ENCODE measurements at regions of chr10 and their contacts with region 1.

Region 1: GRCh38 chr10:116444527-116445142 is 17.0 kb downstream of the PNLIPRP3 start:
- DNase-seq: peak; percentile 21
- H3K4me3 ChIP-seq: no peak overlapping the region
- H3K27ac ChIP-seq: no peak overlapping the region
- H3K4me1 ChIP-seq: no peaks in the 10 kb centered on the region
- H3K27me3 ChIP-seq: no peaks in the 10 kb centered on the region
- CTCF ChIP-seq: peak; percentile 55 to 68
- POLR2A ChIP-seq: no peak

Region 2: GRCh38 chr10:116430288-116430687 is 14.3 kb before region 1 on chr10:
- CTCF ChIA-PET with region 1: no interaction called
- POLR2A ChIA-PET with region 1: no interaction called
- dilution Hi-C with region 1: no loop called
- intact Hi-C with region 1: no loop called
- DNase-seq: no peak
- H3K4me3 ChIP-seq: no peak overlapping the region
- H3K27ac ChIP-seq: no peak overlapping the region
- H3K4me1 ChIP-seq: no peaks in the 10 kb centered on the region
- H3K27me3 ChIP-seq: no peaks in the 10 kb centered on the region
- CTCF ChIP-seq: no peak
- POLR2A ChIP-seq: no peak

Region 3: DNA sequence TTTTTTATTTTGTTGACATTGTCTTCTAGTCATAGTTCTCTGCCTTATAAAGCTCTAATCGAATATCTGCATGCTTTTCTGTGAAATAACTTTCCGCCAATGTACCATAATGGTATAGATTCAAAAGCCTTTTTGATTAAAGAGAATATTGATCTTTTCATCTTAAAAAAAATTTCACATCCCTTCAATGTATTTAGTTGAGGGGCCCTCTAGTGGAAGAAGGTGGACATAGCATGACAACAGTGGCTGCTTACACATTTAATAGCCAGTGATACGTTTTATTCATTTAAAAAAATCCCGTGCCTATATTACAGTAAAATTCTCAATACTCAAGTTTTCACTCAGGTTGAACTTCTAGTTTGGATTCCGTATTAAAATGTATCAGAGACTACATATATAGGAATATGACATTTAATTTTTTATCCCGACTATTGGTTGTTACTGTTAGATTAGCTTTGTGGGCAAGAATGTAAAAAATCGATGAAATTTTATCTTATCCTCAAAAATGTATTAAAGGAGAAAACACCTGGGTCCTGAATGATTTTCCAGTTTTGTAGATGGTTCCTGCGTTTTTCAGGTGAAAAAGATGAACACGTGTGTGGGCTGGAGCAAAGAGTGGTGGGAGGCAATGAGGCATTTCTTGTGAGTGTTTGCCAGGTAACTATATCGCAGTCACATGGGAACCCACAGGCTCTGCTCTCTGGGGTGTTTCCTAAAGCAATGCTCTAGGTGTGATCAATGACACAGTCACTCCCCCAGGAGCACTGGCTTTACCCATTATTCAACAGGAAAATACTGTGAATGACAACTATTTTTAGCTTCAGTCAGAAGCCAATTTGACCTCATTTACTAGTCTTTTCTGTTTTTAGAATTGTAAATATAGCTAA is 77.0 kb after region 1 on chr10:
- CTCF ChIA-PET with region 1: interaction called, 3 read pairs
- POLR2A ChIA-PET with region 1: no interaction called
- dilution Hi-C with region 1: no loop called
- intact Hi-C with region 1: loop called (anchors 1 kb)
- DNase-seq: peak; percentile 32
- H3K4me3 ChIP-seq: no peak overlapping the region
- H3K27ac ChIP-seq: no peak overlapping the region
- H3K4me1 ChIP-seq: no peaks in the 10 kb centered on the region
- H3K27me3 ChIP-seq: no peaks in the 10 kb centered on the region
- CTCF ChIP-seq: peak; percentile 35 to 56
- POLR2A ChIP-seq: no peak

Measured in endothelial cell of umbilical vein (primary cell).